CD8-positive, alpha-beta T cell (primary cell): ENCODE measurements at regions of chr1 and their contacts with region 1.

Region 1: GRCh38 chr1:10472220-10473144 is at the start of gene DFFA:
- DNase-seq: peak; percentile 83 to 96 (median 91)
- ATAC-seq: peak; percentile 75
- H3K4me3 ChIP-seq: peak within 1 kb of the TSS; percentile 62 to 81
- H3K4me3 Mint-ChIP-seq: peak within 1 kb of the TSS; percentile 92
- H3K27ac ChIP-seq: peak within 1 kb of the TSS; percentile 39 to 66
- H3K27ac Mint-ChIP-seq: peak within 1 kb of the TSS; percentile 90
- H3K4me1 ChIP-seq: peaks cover 34% of the 10 kb centered on the region
- H3K4me1 Mint-ChIP-seq: peaks cover 47% of the 10 kb centered on the region
- H3K27me3 ChIP-seq: no peaks in the 10 kb centered on the region
- H3K27me3 Mint-ChIP-seq: no peaks in the 10 kb centered on the region
- CTCF ChIP-seq: no peak
- total RNA-seq, gene DFFA: 10.0 to 10.4 TPM

Region 2: DNA sequence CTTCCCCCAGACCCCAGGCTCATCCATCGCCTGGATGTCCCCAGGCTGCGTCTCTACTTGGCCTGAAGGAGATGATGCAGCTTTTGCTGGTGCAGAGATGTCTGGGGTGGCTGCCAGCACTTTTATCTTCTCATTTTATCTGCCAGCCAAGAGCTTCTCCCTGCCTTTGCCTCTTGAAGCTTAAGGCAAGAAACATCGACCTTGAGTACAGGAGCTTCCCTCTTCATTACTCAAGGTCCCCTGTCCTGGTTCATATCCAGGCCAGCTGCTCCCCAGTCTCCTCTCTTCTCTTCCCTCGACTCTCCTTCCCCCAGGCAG is 1247.1 kb before region 1 on chr1:
- CTCF ChIA-PET with region 1: no interaction called
- POLR2A ChIA-PET with region 1: no interaction called
- intact Hi-C with region 1: no loop called
- DNase-seq: no peak
- ATAC-seq: no peak
- H3K4me3 ChIP-seq: no peak overlapping the region
- H3K4me3 Mint-ChIP-seq: no peak overlapping the region
- H3K27ac ChIP-seq: no peak overlapping the region
- H3K27ac Mint-ChIP-seq: no peak overlapping the region
- H3K4me1 ChIP-seq: no peaks in the 10 kb centered on the region
- H3K4me1 Mint-ChIP-seq: no peaks in the 10 kb centered on the region
- H3K27me3 ChIP-seq: no peaks in the 10 kb centered on the region
- H3K27me3 Mint-ChIP-seq: no peaks in the 10 kb centered on the region
- CTCF ChIP-seq: no peak

Region 3: GRCh38 chr1:10209905-10210810 is 262.3 kb before region 1 on chr1 and contains the start of gene KIF1B:
- CTCF ChIA-PET with region 1: interaction called, 4 read pairs
- POLR2A ChIA-PET with region 1: no interaction called
- intact Hi-C with region 1: loop called in 1 of 2 experiments (anchors 1 kb)
- DNase-seq: peak; percentile 92 to 98 (median 97)
- ATAC-seq: peak; percentile 98
- H3K4me3 ChIP-seq: peak within 1 kb of the TSS; percentile 67 to 82
- H3K4me3 Mint-ChIP-seq: peak within 1 kb of the TSS; percentile 91
- H3K27ac ChIP-seq: peak within 1 kb of the TSS; percentile 54 to 60
- H3K27ac Mint-ChIP-seq: peak within 1 kb of the TSS; percentile 55
- H3K4me1 ChIP-seq: peaks cover 5% of the 10 kb centered on the region
- H3K4me1 Mint-ChIP-seq: peaks cover 25% of the 10 kb centered on the region
- H3K27me3 ChIP-seq: peaks cover 0 to 2% of the 10 kb centered on the region in 2 experiments
- H3K27me3 Mint-ChIP-seq: peaks cover 2% of the 10 kb centered on the region
- CTCF ChIP-seq: peak; percentile 99
- total RNA-seq, gene KIF1B: 6.1 to 7.2 TPM

Region 4: GRCh38 chr1:10253755-10254154 is 218.7 kb before region 1 on chr1:
- CTCF ChIA-PET with region 1: no interaction called
- POLR2A ChIA-PET with region 1: no interaction called
- intact Hi-C with region 1: no loop called
- DNase-seq: no peak
- ATAC-seq: no peak
- H3K4me3 ChIP-seq: no peak overlapping the region
- H3K4me3 Mint-ChIP-seq: no peak overlapping the region
- H3K27ac ChIP-seq: no peak overlapping the region
- H3K27ac Mint-ChIP-seq: no peak overlapping the region
- H3K4me1 ChIP-seq: no peaks in the 10 kb centered on the region
- H3K4me1 Mint-ChIP-seq: no peaks in the 10 kb centered on the region
- H3K27me3 ChIP-seq: no peaks in the 10 kb centered on the region
- H3K27me3 Mint-ChIP-seq: no peaks in the 10 kb centered on the region
- CTCF ChIP-seq: no peak

Region 5: DNA sequence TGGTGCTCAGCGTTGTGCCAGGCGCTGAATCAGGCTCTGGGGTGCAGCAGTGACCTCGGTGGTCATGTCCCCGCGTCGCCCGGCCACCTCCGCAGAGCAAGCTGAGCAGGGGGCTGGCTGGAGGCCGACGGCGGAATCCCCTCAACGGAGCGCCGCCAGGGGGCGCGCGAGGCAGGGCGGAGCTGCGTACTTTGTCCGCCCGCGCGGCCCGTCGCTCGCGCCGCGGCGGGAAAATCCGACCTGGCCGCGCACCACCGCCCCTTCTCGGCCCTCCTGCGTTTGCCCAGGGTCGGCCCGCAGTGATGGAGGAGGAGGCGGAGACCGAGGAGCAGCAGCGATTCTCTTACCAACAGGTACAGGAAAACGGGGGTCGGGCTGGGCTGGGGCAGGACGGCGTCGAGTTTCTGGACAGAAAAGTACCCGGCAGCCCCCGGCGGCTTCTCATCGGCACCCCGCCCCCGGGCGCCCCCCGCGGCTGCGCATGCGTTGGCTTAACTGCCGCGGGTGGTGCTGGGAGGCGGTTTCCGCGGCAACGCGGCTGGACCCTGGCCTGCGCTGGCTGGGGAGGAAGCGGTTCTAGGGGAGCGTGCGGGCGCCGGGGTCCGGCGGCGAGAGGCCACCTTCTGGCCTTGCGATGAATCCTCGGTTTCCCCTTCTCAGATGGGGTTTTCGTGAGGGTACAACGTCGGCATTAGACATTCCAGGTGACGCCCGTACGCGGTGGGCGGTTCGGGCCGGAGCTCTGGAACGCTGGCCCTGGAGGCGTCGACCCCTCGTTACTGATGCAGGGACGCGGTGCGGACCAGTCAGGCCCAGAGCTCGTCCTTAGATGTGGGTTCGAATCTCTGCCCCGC is 42.0 kb before region 1 on chr1 and contains the start of gene CENPS:
- CTCF ChIA-PET with region 1: interaction called, 3 read pairs
- POLR2A ChIA-PET with region 1: no interaction called
- intact Hi-C with region 1: loop called (anchors 1 kb)
- DNase-seq: peak; percentile 72 to 95 (median 92)
- ATAC-seq: peak; percentile 85
- H3K4me3 ChIP-seq: peak within 1 kb of the TSS; percentile 85 to 96
- H3K4me3 Mint-ChIP-seq: peak within 1 kb of the TSS; percentile 89
- H3K27ac ChIP-seq: peak within 1 kb of the TSS; percentile 81 to 86
- H3K27ac Mint-ChIP-seq: peak within 1 kb of the TSS; percentile 91
- H3K4me1 ChIP-seq: peaks cover 18% of the 10 kb centered on the region
- H3K4me1 Mint-ChIP-seq: peaks cover 23% of the 10 kb centered on the region
- H3K27me3 ChIP-seq: no peaks in the 10 kb centered on the region
- H3K27me3 Mint-ChIP-seq: no peaks in the 10 kb centered on the region
- CTCF ChIP-seq: peak; percentile 97
- total RNA-seq, gene CENPS: 2.0 to 3.5 TPM

Region 6: GRCh38 chr1:11099310-11100149 is 627.0 kb after region 1 on chr1 and contains the start of gene EXOSC10:
- CTCF ChIA-PET with region 1: no interaction called
- POLR2A ChIA-PET with region 1: no interaction called
- intact Hi-C with region 1: loop called (anchors 5 kb)
- DNase-seq: peak; percentile 88 to 97 (median 95)
- ATAC-seq: peak; percentile 97
- H3K4me3 ChIP-seq: peak within 1 kb of the TSS; percentile 70 to 86
- H3K4me3 Mint-ChIP-seq: peak within 1 kb of the TSS; percentile 87
- H3K27ac ChIP-seq: peak within 1 kb of the TSS; percentile 60 to 84
- H3K27ac Mint-ChIP-seq: peak within 1 kb of the TSS; percentile 96
- H3K4me1 ChIP-seq: peaks cover 12% of the 10 kb centered on the region
- H3K4me1 Mint-ChIP-seq: peaks cover 17% of the 10 kb centered on the region
- H3K27me3 ChIP-seq: no peaks in the 10 kb centered on the region
- H3K27me3 Mint-ChIP-seq: no peaks in the 10 kb centered on the region
- CTCF ChIP-seq: no peak
- total RNA-seq, gene EXOSC10: 95.0 to 98.1 TPM

Region 7: GRCh38 chr1:11979851-11980675 is 1507.6 kb after region 1 on chr1 and contains the start of gene MFN2:
- CTCF ChIA-PET with region 1: no interaction called
- POLR2A ChIA-PET with region 1: no interaction called
- intact Hi-C with region 1: loop called in 1 of 2 experiments (anchors 5 kb)
- DNase-seq: peak; percentile 87 to 97 (median 92)
- ATAC-seq: peak; percentile 89
- H3K4me3 ChIP-seq: peak within 1 kb of the TSS; percentile 70 to 94
- H3K4me3 Mint-ChIP-seq: peak within 1 kb of the TSS; percentile 89
- H3K27ac ChIP-seq: peak within 1 kb of the TSS; percentile 91 to 95
- H3K27ac Mint-ChIP-seq: peak within 1 kb of the TSS; percentile 95
- H3K4me1 ChIP-seq: peaks cover 23% of the 10 kb centered on the region
- H3K4me1 Mint-ChIP-seq: peaks cover 43% of the 10 kb centered on the region
- H3K27me3 ChIP-seq: no peaks in the 10 kb centered on the region
- H3K27me3 Mint-ChIP-seq: no peaks in the 10 kb centered on the region
- CTCF ChIP-seq: no peak
- total RNA-seq, gene MFN2: 41.7 to 46.0 TPM